ENCODE measurements at regions of chrX and their contacts with region 1.

Region 1: DNA sequence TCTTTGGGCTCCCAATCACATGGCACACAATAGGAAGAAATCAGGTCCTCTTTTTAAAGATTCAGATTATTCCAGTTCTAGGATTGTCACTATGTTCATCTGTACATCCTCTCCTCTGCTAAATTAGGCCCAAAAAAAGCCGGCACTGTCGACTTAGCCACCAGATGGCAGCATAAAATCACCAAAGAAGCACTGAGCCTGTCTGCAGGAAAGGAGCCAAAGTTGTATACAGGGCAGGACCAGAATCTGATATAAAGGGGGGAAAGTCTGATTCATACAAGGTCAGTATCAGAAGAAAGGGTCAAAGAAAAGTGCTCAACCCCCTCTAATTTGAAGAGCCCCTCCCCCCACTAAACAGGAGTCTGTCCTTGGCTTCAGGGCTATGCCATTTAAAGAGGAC is 292.5 kb downstream of the CHIC1 start:
- DNase-seq: no peak

Region 2: GRCh38 chrX:74015379-74016019 is 160.0 kb after region 1 on chrX:
- intact Hi-C with region 1: loop called (anchors 1 kb)
- DNase-seq: no peak

Region 3: DNA sequence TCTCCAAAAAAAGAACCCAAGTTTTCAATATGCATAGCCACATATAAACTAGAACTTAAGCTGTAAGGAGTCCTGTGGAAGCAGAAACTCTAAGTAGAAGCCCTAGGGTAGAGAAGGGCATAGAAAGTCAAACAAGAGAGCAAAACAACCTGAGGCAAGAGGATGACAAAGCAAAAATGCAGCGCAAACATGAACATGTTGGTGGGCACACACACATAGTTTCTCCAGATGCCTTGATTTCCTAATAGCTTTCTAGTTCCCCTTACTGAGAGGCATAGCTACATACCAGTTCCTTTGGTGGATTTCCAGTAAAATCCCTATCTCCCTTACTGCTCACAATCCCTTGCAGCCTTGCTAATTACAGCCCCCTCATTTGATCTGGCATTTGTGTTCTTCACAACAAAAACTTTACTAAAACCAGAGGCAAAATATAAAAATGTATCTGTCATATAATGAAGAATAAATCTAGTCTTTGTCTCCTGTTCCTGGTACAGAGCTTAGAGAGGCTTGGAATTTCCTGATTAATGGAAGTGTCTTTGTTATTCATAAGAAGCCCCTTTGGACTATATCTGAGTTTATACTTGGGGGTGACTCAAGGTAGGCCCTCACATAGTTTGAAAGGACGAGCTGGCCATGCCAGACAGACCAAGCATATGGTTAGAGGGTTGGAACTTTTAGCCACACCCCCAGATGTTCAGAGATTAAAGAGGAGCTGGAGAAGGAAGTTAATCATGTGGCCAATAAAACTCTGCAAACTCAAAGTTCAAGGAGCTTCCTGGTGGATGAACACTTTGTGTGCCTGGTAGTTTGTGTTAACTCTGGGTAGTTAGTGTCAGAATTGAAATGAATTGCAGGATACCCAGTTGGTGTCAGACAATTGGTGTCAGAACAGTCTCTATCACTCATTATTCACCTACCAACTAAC is 395.7 kb after region 1 on chrX:
- intact Hi-C with region 1: no loop called
- DNase-seq: no peak